Ovary (tissue), 10 donors: ENCODE measurements at regions of chr20 and their contacts with region 1.

Region 1: GRCh38 chr20:25399037-25399430 is 8.4 kb upstream of the ABHD12 start:
- DNase-seq: peak in 1 of 5 donors; percentile 46
- H3K4me3 ChIP-seq: no peak overlapping the region
- H3K27ac ChIP-seq: no peak overlapping the region
- H3K4me1 ChIP-seq: no peaks in the 10 kb centered on the region
- H3K27me3 ChIP-seq: no peaks in the 10 kb centered on the region
- CTCF ChIP-seq: peak; percentile 29 to 50 (median 50)
- EP300 ChIP-seq: no peak
- POLR2A ChIP-seq: no peak

Region 2: GRCh38 chr20:25294459-25295385 is 104.3 kb before region 1 on chr20:
- intact Hi-C with region 1: loop called (anchors 5 to 10 kb)
- DNase-seq: peak; percentile 50 to 70 (median 62)
- H3K4me3 ChIP-seq: no peak overlapping the region
- H3K27ac ChIP-seq: no peak overlapping the region
- H3K4me1 ChIP-seq: no peaks in the 10 kb centered on the region
- H3K27me3 ChIP-seq: no peaks in the 10 kb centered on the region
- CTCF ChIP-seq: peak; percentile 28 to 72 (median 63)
- EP300 ChIP-seq: no peak
- POLR2A ChIP-seq: no peak

Region 3: GRCh38 chr20:25336561-25337422 is 62.2 kb before region 1 on chr20:
- intact Hi-C with region 1: no loop called
- DNase-seq: no peak
- H3K4me3 ChIP-seq: no peak overlapping the region
- H3K27ac ChIP-seq: no peak overlapping the region
- H3K4me1 ChIP-seq: peaks cover 2% of the 10 kb centered on the region
- H3K27me3 ChIP-seq: no peaks in the 10 kb centered on the region
- CTCF ChIP-seq: no peak
- EP300 ChIP-seq: no peak
- POLR2A ChIP-seq: no peak

Region 4: DNA sequence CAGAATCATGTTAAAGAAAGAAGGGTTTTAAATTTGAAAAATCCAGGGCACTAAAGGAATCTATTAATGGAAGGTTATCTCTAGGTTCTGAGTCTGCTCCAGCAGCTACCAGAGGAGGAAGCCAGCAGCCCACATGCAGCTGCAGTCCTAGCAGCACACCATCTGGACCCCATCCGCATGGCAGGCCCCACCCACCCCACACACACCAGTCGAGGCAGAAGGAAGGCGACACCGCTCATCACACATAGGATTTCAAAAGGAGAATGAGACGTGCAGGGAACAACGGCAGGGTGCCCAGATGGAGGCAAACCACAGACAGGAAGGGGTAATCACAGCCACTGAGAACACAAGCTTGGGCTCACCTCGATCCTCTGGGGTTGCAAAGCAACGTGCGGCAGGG is 87.3 kb after region 1 on chr20:
- intact Hi-C with region 1: no loop called
- DNase-seq: peak in 3 of 5 donors; percentile 42 to 55 (median 45)
- H3K4me3 ChIP-seq: no peak overlapping the region
- H3K27ac ChIP-seq: no peak overlapping the region
- H3K4me1 ChIP-seq: peaks cover 4% of the 10 kb centered on the region
- H3K27me3 ChIP-seq: no peaks in the 10 kb centered on the region
- CTCF ChIP-seq: no peak
- EP300 ChIP-seq: no peak
- POLR2A ChIP-seq: no peak

Region 5: GRCh38 chr20:25725639-25726038 is 326.6 kb after region 1 on chr20:
- intact Hi-C with region 1: no loop called
- DNase-seq: no peak
- H3K4me3 ChIP-seq: no peak overlapping the region
- H3K27ac ChIP-seq: no peak overlapping the region
- H3K4me1 ChIP-seq: no peaks in the 10 kb centered on the region
- H3K27me3 ChIP-seq: no peaks in the 10 kb centered on the region
- CTCF ChIP-seq: no peak
- EP300 ChIP-seq: no peak
- POLR2A ChIP-seq: no peak